Lower leg skin (tissue), 4 donors: ENCODE measurements at regions of chr3 and their contacts with region 1.

Region 1: DNA sequence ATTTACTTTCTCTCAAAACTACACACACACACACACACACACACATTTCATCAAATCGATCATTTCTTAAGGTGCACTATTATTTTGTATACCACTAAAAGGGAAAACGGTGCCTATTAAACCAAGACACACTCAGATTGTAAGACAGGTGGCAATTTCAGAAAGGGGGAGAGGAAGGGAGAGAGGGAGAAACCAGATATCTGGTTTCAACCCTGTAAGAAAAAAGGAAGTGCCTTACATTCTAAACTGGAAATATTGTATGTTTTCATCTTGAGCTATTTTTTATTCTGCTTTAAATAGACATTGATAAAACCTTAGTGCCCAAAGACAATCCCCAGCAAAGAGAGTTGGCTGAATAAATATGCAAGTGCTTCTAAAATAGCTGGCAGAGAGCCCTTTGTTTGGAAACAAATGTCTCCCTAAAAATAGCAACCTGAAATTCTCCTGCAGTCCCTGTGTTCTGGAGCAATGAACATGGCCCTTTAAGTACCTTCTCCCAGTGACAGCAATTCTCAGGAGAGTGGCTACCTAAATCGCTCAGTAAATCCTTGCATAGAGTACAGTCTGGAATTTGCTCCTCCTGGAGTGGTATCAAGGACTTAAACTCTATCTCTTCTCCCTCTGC is 85.7 kb downstream of the RARB start:
- DNase-seq: no peak
- H3K4me3 ChIP-seq: no peak overlapping the region
- CTCF ChIP-seq: no peak
- POLR2A ChIP-seq: no peak

Region 2: DNA sequence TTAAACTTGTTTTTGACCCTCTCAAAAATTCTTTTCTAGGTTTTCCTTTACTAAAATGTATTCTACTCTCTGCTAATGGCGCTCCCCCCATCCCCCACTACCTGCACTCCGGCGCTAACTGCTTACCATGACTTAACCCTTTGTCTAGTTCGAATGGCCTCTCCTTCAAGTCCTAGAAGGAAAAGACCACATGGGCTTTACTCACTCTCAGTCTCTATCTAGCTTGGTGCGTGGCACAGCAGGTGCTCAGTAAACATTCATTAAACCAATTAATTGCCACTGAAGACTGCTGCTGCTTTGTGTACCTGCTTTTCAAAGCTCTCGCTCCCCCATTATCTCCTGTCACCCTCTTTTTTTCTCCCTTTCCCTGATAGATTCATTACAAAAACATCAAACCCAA is 561.4 kb before region 1 on chr3:
- intact Hi-C with region 1: loop called (anchors 10 kb)
- DNase-seq: no peak
- H3K4me3 ChIP-seq: no peak overlapping the region
- CTCF ChIP-seq: no peak
- POLR2A ChIP-seq: no peak

Region 3: GRCh38 chr3:25171118-25171807 is 342.5 kb before region 1 on chr3:
- intact Hi-C with region 1: no loop called
- DNase-seq: no peak
- H3K4me3 ChIP-seq: no peak overlapping the region
- CTCF ChIP-seq: no peak
- POLR2A ChIP-seq: no peak